Heart right ventricle (tissue), 16 donors: ENCODE measurements at regions of chr6 and their contacts with region 1.

Region 1: GRCh38 chr6:2911171-2911570 is 8.1 kb upstream of the SERPINB9 start:
- DNase-seq: no peak
- ATAC-seq: no peak
- H3K4me3 ChIP-seq: no peak overlapping the region
- H3K27ac ChIP-seq: no peak overlapping the region
- H3K4me1 ChIP-seq: peaks cover 0 to 3% (median 0%) of the 10 kb centered on the region in 9 donors
- H3K27me3 ChIP-seq: no peaks in the 10 kb centered on the region
- CTCF ChIP-seq: no peak

Region 2: DNA sequence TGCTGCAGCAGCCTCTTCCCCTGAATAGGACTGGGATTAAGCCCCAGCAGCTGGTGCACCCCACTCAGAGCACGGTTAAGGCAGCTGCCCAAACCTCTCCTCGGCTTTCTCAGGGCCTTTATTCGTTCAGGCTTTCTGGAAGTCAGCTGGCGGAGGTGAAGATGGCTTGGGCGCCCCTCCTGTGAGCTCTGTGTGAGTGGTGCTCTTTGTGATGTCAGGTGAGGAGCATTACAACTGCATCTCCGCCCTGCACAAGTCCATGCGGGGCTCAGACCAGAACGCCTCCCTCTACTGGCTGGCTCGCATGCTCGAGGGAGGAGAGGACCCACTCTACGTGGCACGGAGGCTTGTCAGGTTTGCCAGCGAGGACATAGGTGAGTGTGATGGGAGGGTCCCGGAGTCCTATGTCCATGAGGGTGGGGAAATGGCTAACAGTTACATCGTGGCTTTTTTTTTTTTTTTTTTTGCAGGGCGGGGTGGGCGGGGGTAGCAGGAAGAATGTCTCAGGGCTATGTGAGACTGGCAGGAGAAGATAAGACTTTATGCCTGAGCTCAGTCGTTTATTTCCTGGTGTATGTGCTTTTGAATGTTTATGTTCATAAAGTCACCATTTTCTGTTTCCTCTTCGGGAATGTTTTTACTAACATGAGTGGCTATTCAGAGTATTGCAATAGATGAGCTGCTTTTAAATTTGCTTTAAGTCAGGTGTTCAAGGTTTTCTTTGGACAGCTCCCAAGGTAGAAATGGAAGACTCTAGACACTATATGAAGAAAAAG is 127.8 kb before region 1 on chr6:
- intact Hi-C with region 1: loop called in 2 of 10 experiments (anchors 5 to 10 kb)
- DNase-seq: no peak
- ATAC-seq: peak in 1 of 8 donors; percentile 27
- H3K4me3 ChIP-seq: no peak overlapping the region
- H3K27ac ChIP-seq: no peak overlapping the region
- H3K4me1 ChIP-seq: peaks cover 0 to 34% (median 18%) of the 10 kb centered on the region in 9 donors
- H3K27me3 ChIP-seq: no peaks in the 10 kb centered on the region
- CTCF ChIP-seq: no peak

Region 3: DNA sequence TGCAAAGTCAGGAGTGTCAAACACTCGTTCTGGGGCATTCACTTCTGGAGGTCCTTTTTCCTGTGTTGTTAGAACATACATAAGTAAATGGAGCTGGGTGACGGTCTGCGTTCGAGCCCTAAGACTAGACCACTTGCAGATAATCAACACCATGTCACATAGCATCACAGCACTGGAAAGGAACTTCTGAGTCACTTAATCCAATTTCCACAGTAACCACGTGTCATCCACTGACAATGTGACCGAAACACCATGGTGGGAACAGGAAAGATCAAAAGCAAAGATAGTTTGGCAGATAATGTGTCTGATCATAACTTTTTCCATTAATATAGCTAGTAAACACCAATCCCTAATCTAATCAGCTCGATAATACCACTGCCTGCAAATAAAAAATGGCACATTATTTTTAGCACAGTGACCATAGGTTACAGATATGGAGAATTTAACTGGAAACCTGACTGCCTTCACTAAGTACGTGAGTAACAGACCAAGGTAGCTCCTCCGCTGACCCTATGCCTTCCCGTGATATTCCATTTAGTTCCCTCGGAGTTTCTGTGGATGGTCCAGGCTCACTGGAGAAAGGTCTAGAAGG is 111.1 kb before region 1 on chr6:
- intact Hi-C with region 1: no loop called
- DNase-seq: no peak
- ATAC-seq: peak in 5 of 8 donors; percentile 36 to 73 (median 58)
- H3K4me3 ChIP-seq: no peak overlapping the region
- H3K27ac ChIP-seq: peak overlapping the region in 3 of 10 donors; percentile 2 to 21 (median 15)
- H3K4me1 ChIP-seq: peaks cover 3 to 43% (median 17%) of the 10 kb centered on the region in 9 donors
- H3K27me3 ChIP-seq: no peaks in the 10 kb centered on the region
- CTCF ChIP-seq: no peak

Region 4: GRCh38 chr6:2848851-2849250 is 62.3 kb before region 1 on chr6:
- intact Hi-C with region 1: loop called in 7 of 10 experiments (anchors 5 to 10 kb)
- DNase-seq: no peak
- ATAC-seq: no peak
- H3K4me3 ChIP-seq: no peak overlapping the region
- H3K27ac ChIP-seq: no peak overlapping the region
- H3K4me1 ChIP-seq: peaks cover 6 to 34% (median 22%) of the 10 kb centered on the region in 9 donors
- H3K27me3 ChIP-seq: no peaks in the 10 kb centered on the region
- CTCF ChIP-seq: no peak

Region 5: DNA sequence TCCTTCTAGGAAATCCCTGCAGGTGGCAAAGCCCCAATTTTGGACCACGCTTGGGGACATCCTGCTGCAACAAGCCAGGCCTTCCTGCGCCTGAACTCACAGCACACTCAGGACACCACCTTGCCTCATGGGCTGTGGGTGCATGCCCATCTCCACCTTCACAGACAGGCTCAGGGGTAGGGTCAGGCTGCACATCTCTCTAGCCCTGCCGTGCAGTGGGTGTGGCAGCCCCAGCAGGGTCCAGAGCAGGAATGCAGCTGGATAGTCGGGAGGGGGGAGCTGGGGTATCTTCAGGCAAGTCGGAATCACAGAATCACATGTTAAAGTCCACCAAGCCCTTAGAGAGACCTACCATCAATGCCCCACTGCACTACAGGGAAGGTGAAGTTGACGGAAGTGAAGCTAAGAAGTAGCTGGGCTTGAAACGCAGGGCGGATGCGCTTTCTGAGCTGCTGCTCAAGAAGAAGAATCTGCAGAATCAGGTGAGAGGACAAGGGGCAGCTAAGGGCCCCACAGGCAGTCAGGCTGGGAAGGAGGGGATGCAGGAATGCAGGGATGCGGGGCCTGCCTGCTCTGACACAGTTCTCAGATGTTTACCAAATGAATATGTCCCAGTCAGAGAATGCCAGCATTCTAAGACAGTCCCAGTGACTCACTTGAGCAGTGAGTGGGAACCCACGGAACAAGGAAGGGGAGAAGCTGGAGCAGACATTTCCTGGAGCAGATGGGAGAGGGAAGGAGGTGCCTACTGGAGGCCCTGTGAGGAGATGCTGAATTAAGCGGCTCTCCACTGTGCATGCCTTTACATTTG is 48.9 kb after region 1 on chr6:
- intact Hi-C with region 1: no loop called
- DNase-seq: no peak
- ATAC-seq: peak in 1 of 8 donors; percentile 30
- H3K4me3 ChIP-seq: no peak overlapping the region
- H3K27ac ChIP-seq: peak overlapping the region in 4 of 10 donors; percentile 1 to 39 (median 10)
- H3K4me1 ChIP-seq: peaks cover 8 to 83% (median 70%) of the 10 kb centered on the region in 9 donors
- H3K27me3 ChIP-seq: no peaks in the 10 kb centered on the region
- CTCF ChIP-seq: no peak